Naive thymus-derived CD4-positive, alpha-beta T cell (primary cell): ENCODE measurements at regions of chr11 and their contacts with region 1.

Region 1: DNA sequence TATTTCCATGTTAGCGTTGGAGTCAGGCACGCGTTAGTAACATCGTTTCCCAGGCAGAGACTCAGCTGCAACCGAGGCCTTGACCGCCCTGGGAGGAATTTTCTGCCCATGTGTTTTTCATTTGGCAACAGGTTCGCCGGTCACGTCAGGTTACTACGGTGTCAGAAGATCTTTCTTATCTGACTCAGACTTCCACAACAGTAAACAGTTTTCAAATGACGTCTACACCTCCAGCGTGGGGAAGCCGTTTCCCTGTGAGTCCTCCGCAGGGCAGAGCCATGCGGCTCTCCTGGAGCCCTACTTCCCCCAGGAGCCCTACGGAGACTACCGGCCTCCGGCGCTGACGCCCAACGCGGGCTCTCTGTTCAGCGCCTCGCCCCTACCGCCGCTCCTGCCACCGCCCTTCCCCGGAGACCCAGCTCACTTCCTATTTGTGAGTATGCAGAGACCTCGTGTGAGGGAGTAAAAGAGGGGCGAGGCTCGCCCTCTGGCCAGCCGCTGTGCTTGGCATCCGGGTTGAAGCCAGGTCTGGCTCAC is 14.3 kb upstream of the POU2AF3 start:
- DNase-seq: no peak
- ATAC-seq: peak; percentile 6
- H3K4me3 ChIP-seq: no peak overlapping the region
- H3K4me3 Mint-ChIP-seq: no peak overlapping the region
- H3K27ac ChIP-seq: no peak overlapping the region
- H3K27ac Mint-ChIP-seq: no peak overlapping the region
- H3K4me1 ChIP-seq: no peaks in the 10 kb centered on the region
- H3K4me1 Mint-ChIP-seq: peaks cover 0 to 3% (median 0%) of the 10 kb centered on the region in 7 donors
- H3K27me3 ChIP-seq: no peaks in the 10 kb centered on the region
- H3K27me3 Mint-ChIP-seq: peaks cover 0 to 14% (median 0%) of the 10 kb centered on the region in 5 donors

Region 2: GRCh38 chr11:111359223-111360149 is 75.5 kb after region 1 on chr11:
- CTCF ChIA-PET with region 1: no interaction called
- POLR2A ChIA-PET with region 1: no interaction called
- intact Hi-C with region 1: loop called in 1 of 2 experiments (anchors 2 kb)
- DNase-seq: no peak
- ATAC-seq: no peak
- H3K4me3 ChIP-seq: no peak overlapping the region
- H3K4me3 Mint-ChIP-seq: no peak overlapping the region
- H3K27ac ChIP-seq: no peak overlapping the region
- H3K27ac Mint-ChIP-seq: no peak overlapping the region
- H3K4me1 ChIP-seq: no peaks in the 10 kb centered on the region
- H3K4me1 Mint-ChIP-seq: peaks cover 0 to 6% (median 0%) of the 10 kb centered on the region in 7 donors
- H3K27me3 ChIP-seq: no peaks in the 10 kb centered on the region
- H3K27me3 Mint-ChIP-seq: no peaks in the 10 kb centered on the region

Region 3: GRCh38 chr11:111422494-111423249 is 138.7 kb after region 1 on chr11:
- CTCF ChIA-PET with region 1: interaction called, 68 read pairs
- POLR2A ChIA-PET with region 1: interaction called, 3 read pairs
- intact Hi-C with region 1: loop called (anchors 1 kb)
- DNase-seq: peak in 7 of 9 donors; percentile 13 to 63 (median 47)
- ATAC-seq: peak; percentile 73
- H3K4me3 ChIP-seq: no peak overlapping the region
- H3K4me3 Mint-ChIP-seq: no peak overlapping the region
- H3K27ac ChIP-seq: no peak overlapping the region
- H3K27ac Mint-ChIP-seq: no peak overlapping the region
- H3K4me1 ChIP-seq: no peaks in the 10 kb centered on the region
- H3K4me1 Mint-ChIP-seq: peaks cover 3 to 18% (median 8%) of the 10 kb centered on the region in 7 donors
- H3K27me3 ChIP-seq: no peaks in the 10 kb centered on the region
- H3K27me3 Mint-ChIP-seq: no peaks in the 10 kb centered on the region

Region 4: DNA sequence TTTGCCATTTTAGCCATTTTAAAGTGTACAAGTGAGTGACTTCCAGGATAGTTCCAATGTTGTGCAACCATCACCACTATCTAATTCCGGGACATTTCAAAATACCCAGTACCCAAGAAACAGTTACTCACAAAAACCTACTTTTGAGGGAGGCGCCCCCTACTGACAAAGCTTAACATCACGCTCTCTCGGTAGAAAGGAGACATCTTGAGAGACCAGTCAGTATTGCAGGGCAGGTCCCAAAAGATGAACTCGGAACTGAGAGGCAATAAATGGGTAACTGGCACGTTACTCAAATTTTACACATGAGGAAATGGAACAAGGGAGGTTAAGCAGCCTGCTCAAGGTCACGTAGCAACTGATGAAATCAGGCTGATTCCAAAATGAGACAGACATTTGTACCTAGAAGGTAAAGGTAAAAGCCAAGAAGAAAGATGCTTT is 145.1 kb after region 1 on chr11:
- CTCF ChIA-PET with region 1: interaction called, 68 read pairs
- POLR2A ChIA-PET with region 1: no interaction called
- intact Hi-C with region 1: loop called (anchors 1 kb)
- DNase-seq: peak in 7 of 9 donors; percentile 17 to 66 (median 40)
- ATAC-seq: peak; percentile 53
- H3K4me3 ChIP-seq: no peak overlapping the region
- H3K4me3 Mint-ChIP-seq: no peak overlapping the region
- H3K27ac ChIP-seq: no peak overlapping the region
- H3K27ac Mint-ChIP-seq: no peak overlapping the region
- H3K4me1 ChIP-seq: no peaks in the 10 kb centered on the region
- H3K4me1 Mint-ChIP-seq: peaks cover 0 to 2% (median 0%) of the 10 kb centered on the region in 7 donors
- H3K27me3 ChIP-seq: no peaks in the 10 kb centered on the region
- H3K27me3 Mint-ChIP-seq: peaks cover 0 to 9% (median 0%) of the 10 kb centered on the region in 5 donors

Region 5: DNA sequence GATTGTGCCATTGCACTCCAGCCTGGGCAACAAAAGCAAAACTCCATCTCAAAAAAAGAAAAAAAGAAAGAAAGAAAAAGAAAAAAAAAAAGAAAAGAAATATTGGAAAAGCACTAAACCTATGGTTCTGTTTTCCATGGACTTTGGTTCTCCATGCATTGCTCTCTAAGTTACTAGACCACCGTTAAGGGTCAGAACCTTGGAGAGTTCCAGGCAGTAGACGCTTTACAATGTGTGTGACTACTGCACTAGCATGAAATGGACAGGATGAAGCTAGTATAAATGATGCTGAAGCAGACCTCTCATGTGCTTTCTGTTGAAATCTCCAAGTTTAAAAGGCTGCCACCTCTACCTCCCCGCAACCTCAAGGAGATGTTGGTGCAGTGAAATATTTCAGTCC is 381.8 kb after region 1 on chr11:
- CTCF ChIA-PET with region 1: no interaction called
- POLR2A ChIA-PET with region 1: no interaction called
- intact Hi-C with region 1: no loop called
- DNase-seq: no peak
- ATAC-seq: no peak
- H3K4me3 ChIP-seq: no peak overlapping the region
- H3K4me3 Mint-ChIP-seq: no peak overlapping the region
- H3K27ac ChIP-seq: no peak overlapping the region
- H3K27ac Mint-ChIP-seq: no peak overlapping the region
- H3K4me1 ChIP-seq: no peaks in the 10 kb centered on the region
- H3K4me1 Mint-ChIP-seq: peaks cover 0 to 12% (median 0%) of the 10 kb centered on the region in 7 donors
- H3K27me3 ChIP-seq: no peaks in the 10 kb centered on the region
- H3K27me3 Mint-ChIP-seq: no peaks in the 10 kb centered on the region